Activated T-helper 2 cell treated with anti-CD3 and anti-CD28 coated beads, Interferon-gamma antibody, Interleukin-2, Interleukin-4, amounts not matched to agents 10 μg/mL and 5 μg/mL and 100 μg/mL, durations not matched to agents 14 hours and 24 hours and 36 hours (primary cell): ENCODE measurements at regions of chrX and their contacts with region 1.

Region 1: GRCh38 chrX:73562984-73563737 is at the start of gene CHIC1:
- DNase-seq: peak; percentile 61
- H3K4me3 Mint-ChIP-seq: peak within 1 kb of the TSS; percentile 97
- H3K27ac Mint-ChIP-seq: peak within 1 kb of the TSS; percentile 95
- H3K4me1 Mint-ChIP-seq: peaks cover 9% of the 10 kb centered on the region
- H3K27me3 Mint-ChIP-seq: no peaks in the 10 kb centered on the region
- total RNA-seq, gene CHIC1: 4.2 and 4.7 TPM in 2 replicates

Region 2: GRCh38 chrX:72572248-72573157 is 990.7 kb before region 1 on chrX and contains the start of gene HDAC8:
- intact Hi-C with region 1: loop called (anchors 5 kb)
- DNase-seq: peak; percentile 22
- H3K4me3 Mint-ChIP-seq: peak within 1 kb of the TSS; percentile 91
- H3K27ac Mint-ChIP-seq: peak within 1 kb of the TSS; percentile 94
- H3K4me1 Mint-ChIP-seq: peaks cover 6% of the 10 kb centered on the region
- H3K27me3 Mint-ChIP-seq: peaks cover 8% of the 10 kb centered on the region
- total RNA-seq, gene HDAC8: 31.2 and 34.9 TPM in 2 replicates

Region 3: DNA sequence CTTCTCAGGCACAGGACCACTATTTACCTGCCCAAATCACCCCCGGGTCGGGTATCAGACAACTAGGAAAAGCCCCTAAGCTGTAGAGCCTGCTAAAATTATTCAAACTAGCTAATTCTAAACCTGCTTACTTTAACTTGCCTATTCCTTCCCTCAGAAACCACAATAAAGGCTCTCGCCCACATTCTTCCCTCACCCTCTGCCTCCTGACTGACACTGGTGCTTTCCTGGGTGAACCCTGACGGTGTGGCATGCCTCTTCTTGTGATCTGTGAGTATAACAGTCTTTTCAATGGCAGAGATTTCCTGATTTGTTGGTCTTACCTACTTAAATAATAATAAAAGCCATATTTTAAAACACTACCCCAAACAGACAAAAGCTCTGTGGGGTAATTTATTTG is 498.7 kb after region 1 on chrX:
- intact Hi-C with region 1: no loop called
- DNase-seq: no peak
- H3K4me3 Mint-ChIP-seq: no peak overlapping the region
- H3K27ac Mint-ChIP-seq: no peak overlapping the region
- H3K4me1 Mint-ChIP-seq: no peaks in the 10 kb centered on the region
- H3K27me3 Mint-ChIP-seq: no peaks in the 10 kb centered on the region

Region 4: GRCh38 chrX:74291964-74292807 is 729.0 kb after region 1 on chrX:
- intact Hi-C with region 1: loop called (anchors 5 kb)
- DNase-seq: peak; percentile 68
- H3K4me3 Mint-ChIP-seq: peak overlapping the region; percentile 97
- H3K27ac Mint-ChIP-seq: peak overlapping the region; percentile 100
- H3K4me1 Mint-ChIP-seq: peaks cover 14% of the 10 kb centered on the region
- H3K27me3 Mint-ChIP-seq: no peaks in the 10 kb centered on the region